Mammary epithelial cell (primary cell): ENCODE measurements at regions of chr7 and their contacts with region 1.

Region 1: GRCh38 chr7:129224251-129225205 is at the start of gene AHCYL2:
- DNase-seq: peak; percentile 98
- H3K4me3 ChIP-seq: peak within 1 kb of the TSS; percentile 75 to 82 (median 78)
- H3K27ac ChIP-seq: peak within 1 kb of the TSS; percentile 77
- H3K4me1 ChIP-seq: peaks cover 15% of the 10 kb centered on the region
- H3K27me3 ChIP-seq: no peaks in the 10 kb centered on the region
- CTCF ChIP-seq: no peak
- total RNA-seq, gene AHCYL2: 19.3 to 26.6 TPM

Region 2: GRCh38 chr7:129240119-129240815 is 15.7 kb after region 1 on chr7:
- CTCF ChIA-PET with region 1: no interaction called
- dilution Hi-C with region 1: no loop called
- in situ Hi-C with region 1: no loop called
- intact Hi-C with region 1: loop called (anchors 2 kb)
- DNase-seq: peak; percentile 16
- H3K4me3 ChIP-seq: no peak overlapping the region
- H3K27ac ChIP-seq: no peak overlapping the region
- H3K4me1 ChIP-seq: no peaks in the 10 kb centered on the region
- H3K27me3 ChIP-seq: no peaks in the 10 kb centered on the region
- CTCF ChIP-seq: no peak

Region 3: DNA sequence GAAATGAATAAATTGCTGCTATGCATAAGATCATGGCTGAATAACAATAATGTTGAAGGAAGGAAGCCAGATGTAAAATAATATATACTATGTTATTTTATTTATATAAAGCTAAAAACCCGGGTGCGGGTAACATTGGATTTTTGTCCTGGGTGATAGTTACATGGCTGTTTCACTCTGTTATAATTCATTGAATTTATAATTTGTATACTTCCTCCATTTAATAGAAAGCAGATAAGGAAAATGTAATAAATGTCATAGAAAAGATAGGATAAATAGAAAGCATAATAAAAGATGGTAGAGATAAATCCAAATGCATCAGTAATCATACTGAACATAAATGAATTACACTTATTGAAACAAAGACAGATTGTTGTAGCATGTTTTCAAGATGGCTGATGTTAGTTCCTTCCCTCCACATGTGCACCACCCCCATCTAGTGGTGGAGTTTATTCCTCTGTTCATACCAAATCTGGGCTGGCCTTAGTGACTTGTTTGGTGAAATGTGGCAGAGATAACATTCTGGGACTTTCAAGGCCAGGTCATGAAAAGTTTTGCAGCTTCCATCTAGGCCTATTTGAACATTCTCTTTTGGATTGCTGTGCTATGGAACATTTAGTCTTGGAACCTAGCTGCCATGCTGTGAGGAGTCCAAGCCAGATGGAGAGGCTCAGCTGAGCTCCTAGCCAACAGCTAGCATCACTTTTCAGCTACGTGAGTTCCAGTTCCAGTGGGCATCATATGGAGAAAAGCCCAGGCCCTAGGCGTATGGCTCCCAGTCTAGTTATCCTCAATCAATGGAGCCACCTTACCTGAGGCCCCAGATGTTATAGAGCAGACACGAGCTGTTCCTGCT is 47.2 kb after region 1 on chr7:
- CTCF ChIA-PET with region 1: no interaction called
- dilution Hi-C with region 1: no loop called
- in situ Hi-C with region 1: loop called in 1 of 2 experiments (anchors 10 kb)
- intact Hi-C with region 1: loop called (anchors 1 kb)
- DNase-seq: peak; percentile 54
- H3K4me3 ChIP-seq: no peak overlapping the region
- H3K27ac ChIP-seq: no peak overlapping the region
- H3K4me1 ChIP-seq: no peaks in the 10 kb centered on the region
- H3K27me3 ChIP-seq: no peaks in the 10 kb centered on the region
- CTCF ChIP-seq: peak; percentile 78 to 86

Region 4: DNA sequence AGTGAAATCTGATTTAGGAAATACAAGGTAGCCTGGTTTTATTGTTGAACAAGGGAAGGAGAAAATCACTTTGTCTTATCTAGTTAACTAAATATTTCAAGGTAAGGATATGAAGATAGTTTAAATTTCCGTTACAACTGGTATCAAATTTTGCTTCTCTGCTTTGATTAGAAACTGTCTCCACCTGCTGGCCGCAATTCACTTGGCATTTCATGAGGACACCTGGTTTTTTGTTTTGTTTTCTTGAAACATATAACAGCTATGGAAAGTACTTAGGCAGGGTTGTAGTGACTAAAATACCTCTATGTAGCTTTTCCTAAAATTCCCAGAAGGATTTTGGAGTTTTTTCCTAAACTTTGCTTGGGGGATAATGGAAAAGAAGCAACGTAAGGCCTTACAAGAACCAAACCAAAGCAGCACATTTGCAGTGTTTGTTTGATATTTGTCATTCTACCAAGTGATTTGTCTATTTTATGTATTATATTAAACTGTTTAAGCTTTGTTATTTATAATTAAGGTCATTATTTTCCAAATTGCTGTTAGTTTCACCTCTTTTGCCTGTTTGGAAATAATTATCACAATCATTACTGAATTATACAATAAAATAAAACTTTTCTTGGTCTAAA is 73.9 kb after region 1 on chr7:
- CTCF ChIA-PET with region 1: no interaction called
- dilution Hi-C with region 1: no loop called
- in situ Hi-C with region 1: loop called in 1 of 2 experiments (anchors 10 kb)
- intact Hi-C with region 1: no loop called
- DNase-seq: peak; percentile 25
- H3K4me3 ChIP-seq: no peak overlapping the region
- H3K27ac ChIP-seq: no peak overlapping the region
- H3K4me1 ChIP-seq: peaks cover 6% of the 10 kb centered on the region
- H3K27me3 ChIP-seq: no peaks in the 10 kb centered on the region
- CTCF ChIP-seq: peak; percentile 77 to 80